Heart right ventricle (tissue), 16 donors: ENCODE measurements at regions of chr5 and their contacts with region 1.

Region 1: GRCh38 chr5:156595132-156595787 is 254.8 kb upstream of the PPP1R2B start:
- DNase-seq: peak; percentile 47 to 62
- ATAC-seq: peak; percentile 67 to 97 (median 90)
- H3K4me3 ChIP-seq: no peak overlapping the region
- H3K27ac ChIP-seq: peak overlapping the region in 9 of 10 donors; percentile 64 to 87 (median 79)
- H3K4me1 ChIP-seq: peaks cover 0 to 38% (median 8%) of the 10 kb centered on the region in 9 donors
- H3K27me3 ChIP-seq: no peaks in the 10 kb centered on the region
- CTCF ChIP-seq: peak in 4 of 9 donors; percentile 10 to 40 (median 17)

Region 2: GRCh38 chr5:156208271-156208670 is 387.0 kb before region 1 on chr5:
- intact Hi-C with region 1: no loop called
- DNase-seq: no peak
- ATAC-seq: no peak
- H3K4me3 ChIP-seq: no peak overlapping the region
- H3K27ac ChIP-seq: no peak overlapping the region
- H3K4me1 ChIP-seq: no peaks in the 10 kb centered on the region
- H3K27me3 ChIP-seq: no peaks in the 10 kb centered on the region
- CTCF ChIP-seq: no peak

Region 3: DNA sequence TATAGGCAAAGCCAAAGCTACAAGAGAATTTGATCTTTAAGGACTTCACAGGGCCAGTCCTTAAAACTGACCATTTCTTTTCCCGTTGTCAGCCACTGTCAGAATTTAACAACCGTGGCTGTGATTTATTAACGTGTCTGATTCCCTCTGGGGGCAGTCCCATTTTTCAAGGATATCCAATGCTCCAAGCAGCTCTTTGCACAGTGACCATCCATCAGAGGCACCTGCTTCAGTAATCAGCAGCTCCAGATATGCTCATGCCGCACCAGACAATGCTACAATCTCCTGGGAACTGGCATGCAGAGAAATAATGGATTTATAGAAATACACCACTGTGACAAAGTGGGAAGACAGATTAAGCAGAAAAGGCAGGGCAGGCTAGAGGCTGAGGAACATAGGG is 91.5 kb after region 1 on chr5:
- intact Hi-C with region 1: loop called in 2 of 10 experiments (anchors 5 to 10 kb)
- DNase-seq: no peak
- ATAC-seq: peak in 6 of 8 donors; percentile 7 to 66 (median 30)
- H3K4me3 ChIP-seq: no peak overlapping the region
- H3K27ac ChIP-seq: peak overlapping the region; percentile 8 to 80 (median 66)
- H3K4me1 ChIP-seq: peaks cover 0 to 52% (median 10%) of the 10 kb centered on the region in 9 donors
- H3K27me3 ChIP-seq: no peaks in the 10 kb centered on the region
- CTCF ChIP-seq: no peak

Region 4: GRCh38 chr5:156794687-156795086 is 199.4 kb after region 1 on chr5:
- intact Hi-C with region 1: no loop called
- DNase-seq: no peak
- ATAC-seq: no peak
- H3K4me3 ChIP-seq: no peak overlapping the region
- H3K27ac ChIP-seq: no peak overlapping the region
- H3K4me1 ChIP-seq: peaks cover 0 to 2% (median 0%) of the 10 kb centered on the region in 9 donors
- H3K27me3 ChIP-seq: no peaks in the 10 kb centered on the region
- CTCF ChIP-seq: no peak